ENCODE measurements at regions of chr9 and their contacts with region 1.

Region 1: GRCh38 chr9:7879551-7880245 is 80.1 kb upstream of the DMAC1 start:
- DNase-seq: no peak
- H3K4me3 ChIP-seq: no peak overlapping the region
- H3K27ac ChIP-seq: no peak overlapping the region
- H3K4me1 ChIP-seq: no peaks in the 10 kb centered on the region
- H3K27me3 ChIP-seq: no peaks in the 10 kb centered on the region
- CTCF ChIP-seq: no peak
- EP300 ChIP-seq: no peak
- POLR2A ChIP-seq: no peak

Region 2: DNA sequence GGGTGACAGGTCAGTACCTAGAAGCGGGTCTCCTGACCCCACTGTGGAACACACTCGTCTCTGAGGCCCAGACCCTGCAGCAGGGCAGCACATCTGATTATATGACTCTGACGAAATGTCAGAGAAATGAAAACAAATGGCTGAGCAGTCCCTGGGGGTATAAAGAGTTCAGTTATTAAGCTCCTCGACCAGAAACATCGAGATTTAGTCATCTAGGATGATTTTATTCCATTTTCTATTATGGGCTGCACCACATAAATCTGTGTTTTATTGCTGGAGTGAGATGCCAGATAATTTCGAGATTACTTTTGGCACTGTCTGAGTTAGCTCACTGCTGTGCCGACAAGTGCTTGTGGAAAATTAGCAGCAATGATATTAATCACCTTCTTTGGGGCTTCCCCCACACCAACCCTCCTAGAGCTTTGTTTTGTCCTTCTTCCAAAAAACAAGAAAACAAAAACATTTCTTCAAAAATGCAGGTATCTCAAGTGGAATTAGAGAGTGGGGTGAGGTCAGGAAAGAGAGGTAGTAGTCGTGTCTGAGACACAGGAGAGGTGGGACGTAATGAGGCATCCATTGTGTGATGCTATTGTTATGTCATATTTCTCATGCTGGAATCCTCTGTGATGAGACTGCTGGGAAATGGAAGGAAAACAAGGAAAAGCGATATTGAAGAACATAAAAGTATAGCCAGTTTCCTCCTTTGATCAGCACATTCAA is 575.6 kb before region 1 on chr9:
- in situ Hi-C with region 1: no loop called
- intact Hi-C with region 1: no loop called
- DNase-seq: no peak
- H3K4me3 ChIP-seq: no peak overlapping the region
- H3K27ac ChIP-seq: no peak overlapping the region
- H3K4me1 ChIP-seq: no peaks in the 10 kb centered on the region
- H3K27me3 ChIP-seq: no peaks in the 10 kb centered on the region
- CTCF ChIP-seq: no peak
- EP300 ChIP-seq: no peak
- POLR2A ChIP-seq: no peak

Region 3: GRCh38 chr9:7799234-7799943 is 80.3 kb before region 1 on chr9 and contains the start of gene DMAC1:
- in situ Hi-C with region 1: loop called in 1 of 4 experiments (anchors 25 kb)
- intact Hi-C with region 1: no loop called
- DNase-seq: peak; percentile 83
- H3K4me3 ChIP-seq: peak within 1 kb of the TSS; percentile 54 to 81 (median 68)
- H3K27ac ChIP-seq: peak within 1 kb of the TSS; percentile 83 to 89 (median 83)
- H3K4me1 ChIP-seq: peaks cover 6 to 13% (median 7%) of the 10 kb centered on the region in 4 donors
- H3K27me3 ChIP-seq: no peaks in the 10 kb centered on the region
- CTCF ChIP-seq: no peak
- EP300 ChIP-seq: no peak
- POLR2A ChIP-seq: peak; percentile 63
- total RNA-seq, gene DMAC1: 6.0 to 19.4 (median 16.5) TPM

Measured in transverse colon (tissue), 4 donors.